Activated naive CD4-positive, alpha-beta T cell treated with anti-CD3 and anti-CD28 coated beads for 36 hours (primary cell): ENCODE measurements at regions of chr1 and their contacts with region 1.

Region 1: GRCh38 chr1:239898062-239898730 is 193.5 kb upstream of the FMN2 start:
- DNase-seq: peak; percentile 86
- H3K4me3 Mint-ChIP-seq: no peak overlapping the region
- H3K27ac Mint-ChIP-seq: no peak overlapping the region
- H3K4me1 Mint-ChIP-seq: peaks cover 2% of the 10 kb centered on the region
- H3K27me3 Mint-ChIP-seq: no peaks in the 10 kb centered on the region

Region 2: GRCh38 chr1:238252033-238252802 is 1646.0 kb before region 1 on chr1:
- CTCF ChIA-PET with region 1: no interaction called
- intact Hi-C with region 1: loop called (anchors 1 kb)
- DNase-seq: peak; percentile 57
- H3K4me3 Mint-ChIP-seq: no peak overlapping the region
- H3K27ac Mint-ChIP-seq: no peak overlapping the region
- H3K4me1 Mint-ChIP-seq: no peaks in the 10 kb centered on the region
- H3K27me3 Mint-ChIP-seq: no peaks in the 10 kb centered on the region

Region 3: DNA sequence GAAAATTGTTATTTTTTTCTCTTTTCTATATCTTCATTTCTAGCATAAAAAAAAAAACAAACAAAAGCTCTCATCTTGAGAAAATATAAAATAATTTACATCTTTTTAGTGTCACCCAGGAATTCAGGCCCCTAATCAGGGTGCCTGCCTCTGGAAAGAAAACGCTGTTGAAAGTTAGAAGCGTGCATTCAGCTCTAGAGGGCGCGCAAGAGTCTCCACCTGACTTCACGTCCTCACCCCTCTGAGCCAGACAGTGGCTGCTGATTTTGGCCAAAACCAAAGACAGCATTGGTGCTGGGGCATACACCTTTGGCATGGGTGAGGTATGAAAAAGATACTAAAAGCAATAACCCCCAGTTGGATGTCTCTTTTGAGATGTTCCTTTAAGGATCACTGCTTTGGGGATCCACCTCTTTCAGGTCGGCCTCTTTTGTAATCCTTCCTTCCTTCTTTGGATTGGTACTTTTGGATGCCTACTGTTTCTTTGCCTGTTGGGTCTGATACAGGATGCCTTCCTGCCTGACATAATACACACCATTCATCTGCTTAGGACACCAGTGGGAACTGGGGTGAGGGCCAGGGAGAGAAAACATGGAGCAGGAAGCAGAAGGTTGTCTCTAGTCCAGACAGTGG is 589.4 kb before region 1 on chr1:
- CTCF ChIA-PET with region 1: interaction called, 3 read pairs
- intact Hi-C with region 1: loop called (anchors 1 kb)
- DNase-seq: peak; percentile 54
- H3K4me3 Mint-ChIP-seq: no peak overlapping the region
- H3K27ac Mint-ChIP-seq: no peak overlapping the region
- H3K4me1 Mint-ChIP-seq: no peaks in the 10 kb centered on the region
- H3K27me3 Mint-ChIP-seq: peaks cover 4% of the 10 kb centered on the region

Region 4: DNA sequence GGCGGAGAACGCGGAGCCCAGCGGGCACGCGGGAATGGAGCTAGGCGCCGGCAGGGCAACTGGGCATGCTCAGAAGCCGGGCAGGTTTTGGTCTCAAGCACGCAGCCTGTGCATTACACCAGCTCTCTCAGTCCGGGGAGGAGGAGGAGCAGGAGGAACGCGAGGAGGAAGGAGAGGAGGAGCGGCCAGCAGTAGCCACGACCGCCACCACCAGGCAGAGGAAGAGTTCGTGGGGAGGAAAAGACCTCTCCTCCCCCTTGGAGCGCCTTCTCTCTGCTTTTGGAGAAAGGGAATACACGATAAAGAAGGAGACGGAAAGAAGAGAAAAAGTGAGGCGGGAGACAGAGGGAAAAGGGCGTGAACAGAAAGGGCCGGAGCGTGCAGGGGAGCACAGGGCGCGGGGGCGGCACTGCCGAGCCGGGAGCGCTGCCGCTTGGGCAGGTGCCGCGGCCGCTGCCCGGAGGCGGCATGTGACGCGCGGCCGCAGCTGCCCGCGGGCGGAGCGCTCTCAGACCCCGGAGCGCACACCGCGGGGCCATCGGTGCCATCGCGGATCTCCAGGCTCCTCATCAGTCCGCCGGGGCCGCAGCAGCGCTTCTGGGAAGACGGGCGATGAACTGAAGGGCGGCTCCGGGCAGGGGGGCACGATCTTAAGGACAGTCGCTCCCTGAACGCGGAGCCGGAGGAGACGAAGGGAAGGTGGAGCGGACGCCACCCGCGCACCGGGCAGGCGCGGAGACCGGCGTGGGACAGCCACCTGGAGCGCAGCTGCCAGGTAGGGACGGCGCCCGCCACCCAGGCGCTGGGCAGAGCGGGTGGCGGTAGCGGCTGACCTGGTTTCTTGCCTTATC is 511.5 kb before region 1 on chr1 and contains the start of gene CHRM3:
- CTCF ChIA-PET with region 1: interaction called, 5 read pairs
- intact Hi-C with region 1: loop called (anchors 1 kb)
- DNase-seq: peak; percentile 44
- H3K4me3 Mint-ChIP-seq: peak within 1 kb of the TSS; percentile 78
- H3K27ac Mint-ChIP-seq: no peak within 1 kb of the TSS
- H3K4me1 Mint-ChIP-seq: peaks cover 21% of the 10 kb centered on the region
- H3K27me3 Mint-ChIP-seq: peaks cover 60% of the 10 kb centered on the region
- total RNA-seq, gene CHRM3: 0.02 TPM in 1 of 2 experiments, not detected in the other

Region 5: GRCh38 chr1:239587066-239587465 is 311.1 kb before region 1 on chr1:
- CTCF ChIA-PET with region 1: interaction called, 7 read pairs
- intact Hi-C with region 1: loop called (anchors 1 kb)
- DNase-seq: peak; percentile 36
- H3K4me3 Mint-ChIP-seq: no peak overlapping the region
- H3K27ac Mint-ChIP-seq: no peak overlapping the region
- H3K4me1 Mint-ChIP-seq: peaks cover 7% of the 10 kb centered on the region
- H3K27me3 Mint-ChIP-seq: no peaks in the 10 kb centered on the region

Region 6: GRCh38 chr1:239792157-239792556 is 106.0 kb before region 1 on chr1:
- CTCF ChIA-PET with region 1: interaction called, 8 read pairs
- intact Hi-C with region 1: loop called (anchors 1 kb)
- DNase-seq: peak; percentile 46
- H3K4me3 Mint-ChIP-seq: no peak overlapping the region
- H3K27ac Mint-ChIP-seq: no peak overlapping the region
- H3K4me1 Mint-ChIP-seq: peaks cover 11% of the 10 kb centered on the region
- H3K27me3 Mint-ChIP-seq: no peaks in the 10 kb centered on the region